ENCODE measurements at regions of chr13 and their contacts with region 1.

Region 1: GRCh38 chr13:35164324-35164932 is 222.4 kb downstream of the NBEA start:
- DNase-seq: no peak
- ATAC-seq: peak in 1 of 2 donors; percentile 68
- H3K4me3 ChIP-seq: no peak overlapping the region
- H3K27ac ChIP-seq: no peak overlapping the region
- H3K4me1 ChIP-seq: no peaks in the 10 kb centered on the region
- H3K27me3 ChIP-seq: no peaks in the 10 kb centered on the region
- CTCF ChIP-seq: peak; percentile 56

Region 2: DNA sequence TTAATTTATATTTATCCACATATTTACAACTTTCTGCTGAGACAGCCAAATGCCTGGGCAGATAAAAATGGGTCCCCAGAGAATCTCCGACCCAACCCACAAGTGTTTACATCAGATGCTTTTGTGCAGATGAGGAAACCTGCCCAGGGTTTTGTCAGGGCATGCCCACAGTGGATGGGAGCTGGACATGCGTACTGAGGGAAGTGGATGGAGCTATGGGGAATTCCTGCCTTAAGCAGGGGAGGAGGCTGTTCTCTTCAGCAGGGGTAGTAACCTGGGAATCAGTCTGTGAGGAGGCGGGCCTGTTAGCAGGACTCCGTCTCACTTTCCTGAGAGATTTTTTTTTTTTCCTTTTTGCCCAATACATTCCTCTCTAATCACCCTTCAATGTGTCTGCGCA is 1223.5 kb before region 1 on chr13:
- intact Hi-C with region 1: loop called (anchors 10 kb)
- DNase-seq: no peak
- ATAC-seq: no peak
- H3K4me3 ChIP-seq: no peak overlapping the region
- H3K27ac ChIP-seq: no peak overlapping the region
- H3K4me1 ChIP-seq: no peaks in the 10 kb centered on the region
- H3K27me3 ChIP-seq: no peaks in the 10 kb centered on the region
- CTCF ChIP-seq: no peak

Region 3: DNA sequence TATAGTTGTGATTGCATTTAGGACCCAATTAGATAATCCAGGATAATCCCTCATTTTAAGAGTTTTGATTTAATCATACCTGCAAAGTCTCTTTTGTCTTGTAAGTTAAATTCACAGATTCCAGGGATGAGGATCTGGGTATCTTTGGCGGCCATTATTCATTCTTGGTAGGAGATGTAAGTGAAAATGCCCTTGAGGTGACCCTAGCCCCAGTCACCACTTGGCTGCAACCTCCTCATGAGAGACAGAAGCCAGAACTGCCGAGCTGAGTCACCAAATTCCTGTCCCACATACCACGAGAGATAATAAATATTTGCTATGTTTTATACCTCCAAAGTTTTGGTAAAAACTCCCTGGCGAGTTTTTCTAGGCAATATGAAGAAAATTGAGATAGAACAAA is 957.1 kb before region 1 on chr13:
- intact Hi-C with region 1: no loop called
- DNase-seq: no peak
- ATAC-seq: no peak
- H3K4me3 ChIP-seq: no peak overlapping the region
- H3K27ac ChIP-seq: no peak overlapping the region
- H3K4me1 ChIP-seq: no peaks in the 10 kb centered on the region
- H3K27me3 ChIP-seq: no peaks in the 10 kb centered on the region
- CTCF ChIP-seq: no peak

Measured in lower lobe of right lung (tissue), 2 donors.